H1 (cell line): ENCODE measurements at regions of chr1 and their contacts with region 1.

Region 1: DNA sequence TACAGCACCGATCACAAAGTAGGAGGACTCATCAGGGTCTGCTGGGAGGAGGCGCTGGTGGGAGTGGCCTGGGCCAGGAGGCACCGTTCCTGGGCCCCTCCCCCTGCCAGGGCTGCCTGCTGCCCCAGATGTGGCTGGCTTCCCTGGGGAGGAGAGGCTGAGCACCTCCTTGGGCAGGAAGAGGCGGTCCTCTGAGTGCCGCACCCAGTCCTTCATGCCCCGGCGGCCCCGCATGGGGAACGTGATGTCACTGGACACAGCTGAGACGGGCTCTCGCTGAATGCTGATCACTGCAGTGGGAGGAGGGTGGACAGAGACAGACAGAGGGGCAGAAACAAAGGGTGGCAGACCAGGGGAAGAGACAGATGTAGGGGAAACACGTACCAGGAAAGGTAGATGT is 24.8 kb downstream of the ADGRB2 start:
- DNase-seq: peak in 1 of 2 experiments; percentile 68
- H3K4me3 ChIP-seq: no peak overlapping the region
- H3K27ac ChIP-seq: no peak overlapping the region
- H3K4me1 ChIP-seq: peaks cover 0 to 5% (median 4%) of the 10 kb centered on the region in 4 experiments; a peak in 3 of 7 replicates
- H3K27me3 ChIP-seq: no peaks in the 10 kb centered on the region
- CTCF ChIP-seq: no peak
- EP300 ChIP-seq: no peak
- POLR2A ChIP-seq: no peak
- RAD21 ChIP-seq: no peak

Region 2: GRCh38 chr1:31723828-31724359 is 15.5 kb before region 1 on chr1:
- CTCF ChIA-PET with region 1: interaction called, 130 read pairs
- POLR2A ChIA-PET with region 1: interaction called, 4 read pairs
- DNase-seq: peak in 1 of 2 experiments; percentile 94
- H3K4me3 ChIP-seq: no peak overlapping the region
- H3K27ac ChIP-seq: 0 out of 2 replicates have a peak overlapping the region, but pooled peaks have one; percentile 9
- H3K4me1 ChIP-seq: peaks cover 0 to 5% (median 2%) of the 10 kb centered on the region in 4 experiments; a peak in 2 of 7 replicates
- H3K27me3 ChIP-seq: no peaks in the 10 kb centered on the region; a peak in 1 of 7 replicates
- CTCF ChIP-seq: no peak
- EP300 ChIP-seq: no peak
- POLR2A ChIP-seq: no peak
- RAD21 ChIP-seq: no peak